ENCODE measurements at regions of chr4 and their contacts with region 1.

Region 1: GRCh38 chr4:139229534-139230039 is 50.4 kb downstream of the MGARP start:
- DNase-seq: no peak
- ATAC-seq: peak; percentile 90 to 91
- H3K4me3 ChIP-seq: no peak overlapping the region
- H3K27ac ChIP-seq: no peak overlapping the region
- H3K4me1 ChIP-seq: no peaks in the 10 kb centered on the region
- H3K27me3 ChIP-seq: no peaks in the 10 kb centered on the region
- CTCF ChIP-seq: peak; percentile 53 to 71 (median 58)
- POLR2A ChIP-seq: no peak

Region 2: GRCh38 chr4:139184129-139184528 is 45.5 kb before region 1 on chr4:
- in situ Hi-C with region 1: no loop called
- intact Hi-C with region 1: loop called (anchors 5 kb)
- DNase-seq: no peak
- ATAC-seq: no peak
- H3K4me3 ChIP-seq: no peak overlapping the region
- H3K27ac ChIP-seq: no peak overlapping the region
- H3K4me1 ChIP-seq: peaks cover 0 to 2% of the 10 kb centered on the region in 2 donors
- H3K27me3 ChIP-seq: no peaks in the 10 kb centered on the region
- CTCF ChIP-seq: no peak
- POLR2A ChIP-seq: no peak

Measured in gastrocnemius medialis (tissue), 4 donors.